MCF 10A (cell line): ENCODE measurements at regions of chr7 and their contacts with region 1.

Region 1: DNA sequence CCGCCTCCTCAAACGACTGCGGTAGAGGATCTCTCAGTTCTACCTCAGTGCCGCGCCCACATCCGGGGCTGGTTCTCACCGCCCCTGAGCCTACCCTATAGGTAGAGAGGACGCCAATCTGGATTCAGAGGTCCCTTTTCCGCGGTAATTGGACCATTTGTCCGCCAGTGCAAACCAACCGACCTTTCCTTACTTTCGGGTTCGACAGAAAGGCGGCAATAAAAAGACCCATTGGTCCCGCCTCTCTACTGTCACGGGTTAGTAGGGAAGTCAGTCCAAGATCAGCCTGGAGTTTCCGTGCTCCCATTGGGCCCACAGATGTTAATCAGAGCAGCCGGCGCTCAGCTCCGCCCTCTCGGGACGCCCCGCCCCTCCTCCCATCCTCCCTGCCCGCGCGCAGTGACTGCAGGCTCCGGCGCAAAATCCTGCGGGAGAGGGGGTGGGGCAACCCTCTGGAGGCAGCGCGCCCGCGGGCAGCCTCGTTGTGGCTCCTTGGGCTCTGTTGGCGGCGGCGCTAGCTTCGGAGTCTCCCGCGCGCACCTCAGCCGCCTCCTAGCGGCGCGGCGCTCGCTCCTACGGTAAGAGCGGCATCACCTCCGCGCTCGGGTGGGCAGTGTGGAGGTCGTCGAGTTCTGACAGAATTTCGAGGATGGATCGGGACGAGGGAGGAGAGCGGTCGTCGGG is at the starts of genes PHTF2 and TMEM60:
- DNase-seq: peak; percentile 100
- H3K4me3 Mint-ChIP-seq: peak within 1 kb of the TSS; percentile 96
- H3K27ac Mint-ChIP-seq: peak within 1 kb of the TSS; percentile 94
- H3K4me1 Mint-ChIP-seq: peaks cover 21% of the 10 kb centered on the region
- H3K27me3 Mint-ChIP-seq: no peaks in the 10 kb centered on the region
- CTCF ChIP-seq: peak; percentile 65
- total RNA-seq, gene PHTF2: 12.6 and 16.0 TPM in 2 replicates
- total RNA-seq, gene TMEM60: 7.1 and 11.6 TPM in 2 replicates

Region 2: GRCh38 chr7:77696198-77697028 is 102.1 kb before region 1 on chr7 and contains the start of gene RSBN1L:
- CTCF ChIA-PET with region 1: interaction called, 3 read pairs
- POLR2A ChIA-PET with region 1: interaction called, 40 read pairs
- intact Hi-C with region 1: no loop called
- DNase-seq: peak; percentile 98
- H3K4me3 Mint-ChIP-seq: peak within 1 kb of the TSS; percentile 98
- H3K27ac Mint-ChIP-seq: peak within 1 kb of the TSS; percentile 95
- H3K4me1 Mint-ChIP-seq: peaks cover 24% of the 10 kb centered on the region
- H3K27me3 Mint-ChIP-seq: no peaks in the 10 kb centered on the region
- CTCF ChIP-seq: no peak
- total RNA-seq, gene RSBN1L: 10.9 and 12.1 TPM in 2 replicates

Region 3: DNA sequence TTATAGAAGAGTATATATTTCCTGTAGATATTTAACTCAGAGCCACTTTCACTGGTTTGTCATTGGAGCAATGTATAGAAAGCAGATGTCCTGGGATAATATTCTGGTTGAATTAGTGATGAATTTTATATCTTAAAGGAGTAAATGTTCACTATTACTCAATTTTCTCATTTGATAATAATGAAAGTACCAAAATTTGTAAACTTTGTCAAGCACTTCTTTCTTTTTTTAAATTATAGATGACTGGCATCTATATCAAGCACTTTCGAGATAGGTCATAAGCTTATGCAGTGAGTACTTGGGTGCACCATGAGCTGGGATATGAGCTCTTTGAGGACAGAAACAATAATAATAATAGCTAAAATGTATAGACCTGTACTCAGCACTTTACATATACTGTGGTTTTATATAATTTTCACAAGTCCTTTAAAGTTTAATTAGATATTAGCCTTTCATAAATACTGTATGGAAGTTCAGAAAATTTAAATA is 91.0 kb before region 1 on chr7:
- CTCF ChIA-PET with region 1: no interaction called
- POLR2A ChIA-PET with region 1: no interaction called
- intact Hi-C with region 1: no loop called
- DNase-seq: no peak
- H3K4me3 Mint-ChIP-seq: no peak overlapping the region
- H3K27ac Mint-ChIP-seq: no peak overlapping the region
- H3K4me1 Mint-ChIP-seq: peaks cover 31% of the 10 kb centered on the region
- H3K27me3 Mint-ChIP-seq: no peaks in the 10 kb centered on the region
- CTCF ChIP-seq: no peak

Region 4: GRCh38 chr7:77837290-77837689 is 38.8 kb after region 1 on chr7:
- CTCF ChIA-PET with region 1: interaction called, 4 read pairs
- POLR2A ChIA-PET with region 1: interaction called, 24 read pairs
- intact Hi-C with region 1: no loop called
- DNase-seq: no peak
- H3K4me3 Mint-ChIP-seq: no peak overlapping the region
- H3K27ac Mint-ChIP-seq: no peak overlapping the region
- H3K4me1 Mint-ChIP-seq: peaks cover 18% of the 10 kb centered on the region
- H3K27me3 Mint-ChIP-seq: no peaks in the 10 kb centered on the region
- CTCF ChIP-seq: no peak

Region 5: GRCh38 chr7:77903597-77903996 is 105.1 kb after region 1 on chr7:
- CTCF ChIA-PET with region 1: no interaction called
- POLR2A ChIA-PET with region 1: interaction called, 4 read pairs
- intact Hi-C with region 1: loop called (anchors 10 kb)
- DNase-seq: peak; percentile 43
- H3K4me3 Mint-ChIP-seq: no peak overlapping the region
- H3K27ac Mint-ChIP-seq: no peak overlapping the region
- H3K4me1 Mint-ChIP-seq: peaks cover 4% of the 10 kb centered on the region
- H3K27me3 Mint-ChIP-seq: no peaks in the 10 kb centered on the region
- CTCF ChIP-seq: no peak

Region 6: DNA sequence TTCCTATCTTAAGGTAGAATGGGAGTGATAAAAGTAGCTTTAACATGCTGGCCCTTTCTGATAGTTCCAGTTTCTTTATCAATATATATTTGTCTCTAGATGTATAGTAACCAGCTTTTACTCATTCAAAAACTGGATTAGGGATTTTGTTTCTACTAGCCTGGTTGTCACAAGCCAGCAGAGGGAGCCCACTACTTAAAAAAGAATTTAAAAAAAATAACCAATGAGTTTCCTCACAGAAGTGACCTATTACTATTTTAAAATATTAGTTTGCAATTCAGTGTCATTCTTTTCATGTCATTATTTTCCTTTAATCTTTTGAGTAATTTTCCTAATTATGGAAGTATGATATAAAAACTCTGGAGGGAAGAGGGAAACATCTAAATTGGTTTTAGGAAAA is 142.1 kb after region 1 on chr7:
- CTCF ChIA-PET with region 1: interaction called, 12 read pairs
- POLR2A ChIA-PET with region 1: interaction called, 7 read pairs
- intact Hi-C with region 1: no loop called
- DNase-seq: peak; percentile 44
- H3K4me3 Mint-ChIP-seq: no peak overlapping the region
- H3K27ac Mint-ChIP-seq: no peak overlapping the region
- H3K4me1 Mint-ChIP-seq: no peaks in the 10 kb centered on the region
- H3K27me3 Mint-ChIP-seq: no peaks in the 10 kb centered on the region
- CTCF ChIP-seq: peak; percentile 66